Esophagus muscularis mucosa (tissue), 4 donors: ENCODE measurements at regions of chr20 and their contacts with region 1.

Region 1: DNA sequence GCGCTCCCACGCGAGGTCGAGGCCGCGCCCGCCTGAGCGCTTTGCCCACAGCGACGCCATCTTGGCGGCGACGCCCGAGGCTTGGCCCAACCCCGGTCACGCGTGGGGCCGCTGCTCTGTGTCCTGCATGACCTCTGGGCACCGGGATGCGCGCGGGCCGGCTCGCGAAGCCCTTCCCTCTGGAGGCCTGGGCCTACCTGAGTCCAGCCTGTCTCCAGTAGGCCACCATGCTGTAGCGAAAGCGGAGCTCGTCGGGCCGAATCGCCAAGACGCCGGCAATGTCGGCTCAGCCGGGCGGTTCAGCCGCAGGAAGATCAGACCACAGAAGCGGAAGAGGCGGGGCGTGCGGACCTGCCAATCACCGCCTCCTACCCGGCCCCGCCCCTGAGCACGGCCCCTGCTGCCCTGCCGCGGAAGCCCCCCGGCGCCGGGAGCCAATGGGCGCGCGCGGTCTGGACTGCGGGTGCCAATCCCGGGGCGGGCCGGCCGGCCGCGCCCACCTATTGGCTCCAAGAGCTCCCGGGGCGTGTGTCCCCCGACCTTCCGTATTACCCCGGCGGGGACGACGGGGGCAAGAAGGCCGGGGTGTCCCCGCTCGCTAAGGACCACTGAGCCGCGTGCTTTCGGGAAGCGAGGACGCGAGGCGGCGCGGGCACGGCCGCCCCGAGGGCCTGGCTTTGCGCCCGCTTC is at the start of gene ATP5F1E:
- DNase-seq: peak; percentile 98
- H3K4me3 ChIP-seq: peak within 1 kb of the TSS; percentile 79 to 89 (median 86)
- H3K27ac ChIP-seq: peak within 1 kb of the TSS; percentile 87 to 93 (median 90)
- H3K4me1 ChIP-seq: peaks cover 39 to 54% (median 51%) of the 10 kb centered on the region in 4 donors
- H3K27me3 ChIP-seq: no peaks in the 10 kb centered on the region
- CTCF ChIP-seq: no peak
- EP300 ChIP-seq: no peak
- POLR2A ChIP-seq: peak; percentile 95
- total RNA-seq, gene ATP5F1E: 30.8 to 44.0 (median 37.2) TPM

Region 2: DNA sequence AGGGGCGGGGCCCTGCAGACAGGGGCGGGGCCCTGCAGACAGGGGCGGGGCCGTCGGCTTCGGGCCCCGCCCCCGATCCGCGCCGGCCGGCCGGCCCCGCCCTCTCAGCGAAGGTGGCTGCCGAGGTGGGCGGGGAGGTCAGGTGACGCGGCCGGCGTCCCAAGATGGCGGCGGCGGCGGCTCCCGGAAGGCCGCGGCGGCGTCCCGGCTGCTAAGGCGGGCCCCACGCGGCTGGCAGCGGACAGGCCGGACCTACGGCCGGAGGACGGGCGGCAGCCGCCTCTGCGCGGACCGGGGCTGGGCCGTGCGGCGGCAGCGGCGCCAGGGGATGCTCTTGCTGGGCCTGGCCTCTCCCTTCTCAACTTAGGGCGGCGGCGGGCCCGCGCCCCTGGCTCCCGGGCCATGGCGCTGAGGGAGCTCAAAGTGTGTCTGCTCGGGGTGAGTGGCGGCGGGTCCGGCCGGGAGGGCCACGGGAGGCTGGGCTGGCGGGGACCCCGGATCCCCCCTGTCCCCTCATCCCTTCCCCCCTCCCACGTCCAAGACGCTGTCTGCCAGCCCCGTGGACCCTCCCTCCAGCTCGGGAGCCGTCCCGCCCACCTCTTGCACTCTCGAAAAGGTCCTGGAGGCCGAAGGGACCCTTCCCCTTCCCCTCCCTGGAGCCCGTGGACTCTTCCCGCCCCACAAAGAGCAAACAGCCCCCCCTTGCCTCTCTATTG is 722.4 kb before region 1 on chr20 and contains the start of gene RAB22A:
- intact Hi-C with region 1: loop called (anchors 10 kb)
- DNase-seq: no peak
- H3K4me3 ChIP-seq: peak within 1 kb of the TSS; percentile 87 to 100 (median 94)
- H3K27ac ChIP-seq: peak within 1 kb of the TSS; percentile 79 to 90 (median 88)
- H3K4me1 ChIP-seq: peaks cover 15 to 54% (median 44%) of the 10 kb centered on the region in 4 donors
- H3K27me3 ChIP-seq: no peaks in the 10 kb centered on the region
- CTCF ChIP-seq: no peak
- EP300 ChIP-seq: no peak
- POLR2A ChIP-seq: no peak
- total RNA-seq, gene RAB22A: 17.9 to 24.0 (median 20.4) TPM

Region 3: GRCh38 chr20:58980700-58981627 is 51.2 kb before region 1 on chr20 and contains the start of gene NELFCD:
- intact Hi-C with region 1: loop called (anchors 5 kb)
- DNase-seq: peak; percentile 94
- H3K4me3 ChIP-seq: peak within 1 kb of the TSS; percentile 73 to 97 (median 84)
- H3K27ac ChIP-seq: peak within 1 kb of the TSS; percentile 81 to 83 (median 82)
- H3K4me1 ChIP-seq: peaks cover 33 to 49% (median 47%) of the 10 kb centered on the region in 4 donors
- H3K27me3 ChIP-seq: no peaks in the 10 kb centered on the region
- CTCF ChIP-seq: no peak
- EP300 ChIP-seq: no peak
- POLR2A ChIP-seq: no peak
- total RNA-seq, gene NELFCD: 30.5 to 41.5 (median 34.9) TPM

Region 4: DNA sequence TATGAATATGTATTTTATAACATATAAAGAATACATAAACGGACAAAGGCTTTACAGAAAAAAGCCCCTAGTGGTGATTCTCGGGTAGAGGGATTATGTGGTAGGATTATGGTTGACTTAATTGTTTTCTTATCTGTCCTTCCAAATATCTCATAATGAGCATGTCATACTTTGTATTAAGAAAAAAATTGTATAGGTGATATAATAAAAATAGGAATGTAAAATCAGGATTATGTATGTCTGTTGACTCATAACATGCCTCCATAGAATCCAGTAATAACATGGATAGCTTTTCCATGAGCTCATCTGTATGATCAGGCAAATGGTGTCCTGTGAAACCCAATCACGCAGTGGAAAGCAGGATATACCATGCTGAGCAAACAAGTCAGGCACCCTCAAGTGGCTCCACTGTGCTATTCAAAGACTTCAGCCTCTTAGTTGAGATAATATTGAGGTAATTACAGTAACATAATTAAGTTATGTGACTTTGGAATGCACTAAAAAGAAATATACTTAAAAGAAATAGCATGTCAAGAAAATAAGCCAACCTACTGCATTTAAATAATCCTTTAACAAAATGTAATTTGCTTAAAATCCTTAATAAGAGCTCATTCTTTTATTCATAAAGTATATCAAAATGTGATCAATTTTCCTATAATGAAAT is 50.0 kb after region 1 on chr20:
- intact Hi-C with region 1: no loop called
- DNase-seq: no peak
- H3K4me3 ChIP-seq: no peak overlapping the region
- H3K27ac ChIP-seq: no peak overlapping the region
- H3K4me1 ChIP-seq: peaks cover 0 to 12% (median 6%) of the 10 kb centered on the region in 4 donors
- H3K27me3 ChIP-seq: peaks cover 0 to 25% (median 0%) of the 10 kb centered on the region in 4 donors
- CTCF ChIP-seq: peak in 2 of 3 experiments; percentile 21 to 34
- EP300 ChIP-seq: no peak
- POLR2A ChIP-seq: no peak